Dendritic cell treated with granulocyte-macrophage colony-stimulating factor and Interleukin-4, amounts not matched to agents 40 ng/mL and 50 ng/mL, for 4 days (primary cell): ENCODE measurements at regions of chr15 and their contacts with region 1.

Region 1: GRCh38 chr15:82108489-82109078 is 62.8 kb upstream of the MEX3B start:
- H3K4me3 Mint-ChIP-seq: no peak overlapping the region
- H3K27ac Mint-ChIP-seq: peak overlapping the region; percentile 4
- H3K4me1 Mint-ChIP-seq: peaks cover 6% of the 10 kb centered on the region
- H3K27me3 Mint-ChIP-seq: no peaks in the 10 kb centered on the region

Region 2: GRCh38 chr15:82139823-82140268 is 31.3 kb after region 1 on chr15:
- intact Hi-C with region 1: loop called (anchors 2 kb)
- H3K4me3 Mint-ChIP-seq: no peak overlapping the region
- H3K27ac Mint-ChIP-seq: no peak overlapping the region
- H3K4me1 Mint-ChIP-seq: peaks cover 6% of the 10 kb centered on the region
- H3K27me3 Mint-ChIP-seq: no peaks in the 10 kb centered on the region

Region 3: GRCh38 chr15:82197733-82198594 is 89.4 kb after region 1 on chr15:
- intact Hi-C with region 1: loop called (anchors 1 kb)
- H3K4me3 Mint-ChIP-seq: no peak overlapping the region
- H3K27ac Mint-ChIP-seq: no peak overlapping the region
- H3K4me1 Mint-ChIP-seq: no peaks in the 10 kb centered on the region
- H3K27me3 Mint-ChIP-seq: no peaks in the 10 kb centered on the region

Region 4: DNA sequence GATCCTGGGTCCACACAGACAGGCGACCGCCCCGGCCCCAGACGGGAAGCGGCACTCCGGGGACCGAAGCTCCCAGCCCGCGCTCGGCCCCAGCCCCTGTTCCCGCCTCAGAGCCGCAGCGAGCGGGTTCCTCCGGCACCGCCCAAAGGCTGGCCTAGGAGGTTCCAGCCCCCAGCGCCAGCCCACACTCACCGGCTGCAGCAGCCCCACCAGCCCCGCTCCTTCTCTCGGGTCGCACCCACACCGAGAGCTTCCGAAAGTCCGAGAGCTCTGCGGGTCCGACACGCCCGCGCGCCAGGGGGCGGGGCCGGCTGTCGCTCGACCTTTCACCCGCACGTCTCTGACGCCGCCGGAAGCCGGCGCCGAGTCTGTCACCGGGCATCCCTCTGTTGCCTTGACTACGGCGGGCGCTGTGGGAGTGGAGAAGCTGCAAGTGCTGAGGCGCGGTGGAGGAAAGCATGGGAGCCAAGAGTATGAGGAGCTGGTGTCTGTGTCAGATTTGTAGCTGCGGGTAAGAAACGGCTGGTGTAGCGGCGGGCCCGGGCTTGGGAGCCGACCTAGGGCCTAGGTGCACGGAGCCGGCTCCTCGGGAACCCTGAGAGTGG is 153.9 kb after region 1 on chr15 and contains the starts of genes EFL1 and SAXO2:
- intact Hi-C with region 1: no loop called
- H3K4me3 Mint-ChIP-seq: peak within 1 kb of the TSS; percentile 94
- H3K27ac Mint-ChIP-seq: peak within 1 kb of the TSS; percentile 91
- H3K4me1 Mint-ChIP-seq: peaks cover 33% of the 10 kb centered on the region
- H3K27me3 Mint-ChIP-seq: no peaks in the 10 kb centered on the region

Region 5: GRCh38 chr15:83287541-83288027 is 1179.0 kb after region 1 on chr15:
- intact Hi-C with region 1: no loop called
- H3K4me3 Mint-ChIP-seq: no peak overlapping the region
- H3K27ac Mint-ChIP-seq: no peak overlapping the region
- H3K4me1 Mint-ChIP-seq: peaks cover 11% of the 10 kb centered on the region
- H3K27me3 Mint-ChIP-seq: peaks cover 66% of the 10 kb centered on the region